AG04450 (cell line): ENCODE measurements at regions of chr7 and their contacts with region 1.

Region 1: DNA sequence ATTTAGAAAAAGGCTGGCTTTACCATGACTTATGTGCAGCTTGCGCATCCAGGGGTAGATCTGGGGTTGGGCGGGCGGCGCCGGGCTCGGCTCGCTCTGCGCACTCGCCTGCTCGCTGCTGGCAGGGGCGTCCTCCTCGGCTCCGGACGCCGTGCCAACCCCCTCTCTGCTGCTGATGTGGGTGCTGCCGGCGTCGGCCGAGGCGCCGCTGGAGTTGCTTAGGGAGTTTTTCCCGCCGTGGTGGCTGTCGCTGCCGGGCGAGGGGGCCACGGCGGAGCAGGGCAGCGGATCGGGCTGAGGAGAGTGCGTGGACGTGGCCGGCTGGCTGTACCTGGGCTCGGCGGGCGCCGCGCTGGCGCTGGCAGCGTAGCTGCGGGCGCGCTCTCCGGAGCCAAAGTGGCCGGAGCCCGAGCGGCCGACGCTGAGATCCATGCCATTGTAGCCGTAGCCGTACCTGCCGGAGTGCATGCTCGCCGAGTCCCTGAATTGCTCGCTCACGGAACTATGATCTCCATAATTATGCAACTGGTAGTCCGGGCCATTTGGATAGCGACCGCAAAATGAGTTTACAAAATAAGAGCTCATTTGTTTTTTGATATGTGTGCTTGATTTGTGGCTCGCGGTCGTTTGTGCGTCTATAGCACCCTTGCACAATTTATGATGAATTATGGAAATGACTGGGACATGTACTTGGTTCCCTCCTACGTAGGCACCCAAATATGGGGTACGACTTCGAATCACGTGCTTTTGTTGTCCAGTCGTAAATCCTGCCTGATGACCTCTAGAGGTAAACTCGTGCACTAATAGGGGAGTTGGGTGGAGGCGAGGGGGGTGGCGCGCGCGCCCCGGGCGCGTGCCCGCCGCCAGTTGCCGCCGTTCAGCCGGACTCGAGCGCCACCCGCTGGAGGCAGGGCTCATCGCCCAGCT is at the start of gene HOXA5:
- DNase-seq: peak; percentile 100
- H3K4me3 ChIP-seq: peak within 1 kb of the TSS; percentile 94
- H3K27ac ChIP-seq: peak within 1 kb of the TSS; percentile 93
- H3K27me3 ChIP-seq: no peaks in the 10 kb centered on the region
- CTCF ChIP-seq: peak; percentile 84; the same call in 1 of the 2 replicates
- polyA plus RNA-seq, gene HOXA5: 48.3 and 51.0 TPM in 2 replicates

Region 2: GRCh38 chr7:26853788-26854393 is 289.4 kb before region 1 on chr7:
- CTCF ChIA-PET with region 1: interaction called, 93 read pairs
- POLR2A ChIA-PET with region 1: interaction called, 18 read pairs
- DNase-seq: no peak
- H3K4me3 ChIP-seq: no peak overlapping the region
- H3K27ac ChIP-seq: no peak overlapping the region
- H3K27me3 ChIP-seq: no peaks in the 10 kb centered on the region
- CTCF ChIP-seq: peak; percentile 69

Region 3: GRCh38 chr7:27110186-27111031 is 32.9 kb before region 1 on chr7:
- CTCF ChIA-PET with region 1: interaction called, 16 read pairs
- POLR2A ChIA-PET with region 1: interaction called, 21 read pairs
- DNase-seq: peak; percentile 68
- H3K4me3 ChIP-seq: peak overlapping the region; percentile 84
- H3K27ac ChIP-seq: peak overlapping the region; percentile 95
- H3K27me3 ChIP-seq: no peaks in the 10 kb centered on the region
- CTCF ChIP-seq: no peak

Region 4: GRCh38 chr7:27122077-27122910 is 21.0 kb before region 1 on chr7:
- CTCF ChIA-PET with region 1: interaction called, 16 read pairs
- POLR2A ChIA-PET with region 1: interaction called, 14 read pairs
- DNase-seq: no peak
- H3K4me3 ChIP-seq: peak overlapping the region; percentile 60
- H3K27ac ChIP-seq: peak overlapping the region; percentile 94
- H3K27me3 ChIP-seq: no peaks in the 10 kb centered on the region
- CTCF ChIP-seq: no peak

Region 5: DNA sequence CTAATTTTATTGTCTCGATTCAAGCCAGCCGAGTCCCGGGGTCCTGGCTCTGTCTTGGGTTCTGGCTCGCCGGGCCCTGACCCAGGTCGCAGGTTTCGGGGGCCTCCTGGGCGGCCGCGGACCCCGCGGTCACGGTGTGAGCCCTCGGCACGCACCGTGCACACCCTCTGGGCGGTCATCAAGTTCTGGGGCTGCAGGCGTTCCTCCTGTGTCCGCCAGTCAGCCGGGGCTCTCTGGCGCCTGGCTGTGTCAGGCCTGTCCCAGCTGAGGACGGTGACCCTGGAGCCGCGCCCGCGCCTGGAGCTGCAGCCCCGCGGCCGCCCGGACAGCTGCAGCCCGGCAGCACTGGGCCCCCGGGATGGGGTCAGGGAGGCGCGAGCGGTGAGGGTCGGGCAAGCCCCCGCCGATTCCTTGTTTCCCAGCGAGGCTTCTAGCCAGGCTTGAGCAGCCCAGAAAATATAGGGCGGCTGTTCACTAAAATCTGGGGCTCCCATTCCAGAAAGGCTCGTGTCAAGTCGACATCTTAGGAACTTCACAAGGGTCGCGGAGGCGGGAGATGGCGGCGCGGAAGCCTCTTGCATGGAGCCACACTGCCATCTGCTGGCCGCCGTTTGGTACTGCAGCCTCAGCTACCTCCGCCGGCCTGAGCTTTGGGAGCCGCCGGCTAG is 17.4 kb after region 1 on chr7:
- CTCF ChIA-PET with region 1: interaction called, 12 read pairs
- POLR2A ChIA-PET with region 1: interaction called, 3 read pairs
- DNase-seq: peak; percentile 64
- H3K4me3 ChIP-seq: peak overlapping the region; percentile 62
- H3K27ac ChIP-seq: no peak overlapping the region
- H3K27me3 ChIP-seq: peaks cover 26% of the 10 kb centered on the region
- CTCF ChIP-seq: peak; percentile 96

Region 6: DNA sequence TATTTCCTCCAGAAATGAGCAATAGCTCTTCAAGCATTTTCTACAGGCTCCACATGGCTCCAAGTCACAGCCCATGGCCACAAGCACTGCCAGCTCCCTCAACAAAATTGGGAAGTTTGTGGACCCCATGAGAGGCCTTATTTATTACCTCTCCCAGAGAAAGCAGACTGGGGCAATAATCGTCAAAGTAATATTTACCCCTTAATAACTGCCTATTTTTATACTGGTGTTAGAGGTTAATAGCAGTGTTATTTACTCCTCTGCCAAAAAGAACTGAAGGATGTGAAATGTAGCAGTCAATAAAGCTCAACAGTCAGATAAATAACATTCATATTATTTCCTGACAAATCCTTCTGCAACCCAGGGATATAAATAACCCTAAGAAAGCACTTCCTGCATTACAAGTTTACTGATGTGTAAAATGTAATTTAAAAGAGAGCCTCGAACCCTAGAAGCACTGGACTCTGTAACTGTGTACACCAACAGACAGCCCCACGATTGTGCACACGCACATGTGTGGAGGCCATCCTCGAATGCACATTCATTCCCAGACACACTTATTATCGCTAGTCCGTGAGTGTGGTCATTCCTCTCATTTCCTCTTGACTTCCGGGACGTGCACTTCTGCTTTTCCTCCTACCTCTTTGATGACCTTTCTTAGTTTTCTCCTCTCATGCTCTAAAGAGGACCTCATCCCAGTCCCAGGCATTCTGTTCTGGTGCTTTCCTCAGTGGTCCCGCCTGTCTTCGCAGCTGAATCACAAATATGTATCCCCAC is 256.7 kb after region 1 on chr7:
- CTCF ChIA-PET with region 1: no interaction called
- POLR2A ChIA-PET with region 1: no interaction called
- DNase-seq: no peak
- H3K4me3 ChIP-seq: no peak overlapping the region
- H3K27ac ChIP-seq: no peak overlapping the region
- H3K27me3 ChIP-seq: peaks cover 8% of the 10 kb centered on the region
- CTCF ChIP-seq: no peak